K562 (cell line): ENCODE measurements at regions of chr9 and their contacts with region 1.

Region 1: DNA sequence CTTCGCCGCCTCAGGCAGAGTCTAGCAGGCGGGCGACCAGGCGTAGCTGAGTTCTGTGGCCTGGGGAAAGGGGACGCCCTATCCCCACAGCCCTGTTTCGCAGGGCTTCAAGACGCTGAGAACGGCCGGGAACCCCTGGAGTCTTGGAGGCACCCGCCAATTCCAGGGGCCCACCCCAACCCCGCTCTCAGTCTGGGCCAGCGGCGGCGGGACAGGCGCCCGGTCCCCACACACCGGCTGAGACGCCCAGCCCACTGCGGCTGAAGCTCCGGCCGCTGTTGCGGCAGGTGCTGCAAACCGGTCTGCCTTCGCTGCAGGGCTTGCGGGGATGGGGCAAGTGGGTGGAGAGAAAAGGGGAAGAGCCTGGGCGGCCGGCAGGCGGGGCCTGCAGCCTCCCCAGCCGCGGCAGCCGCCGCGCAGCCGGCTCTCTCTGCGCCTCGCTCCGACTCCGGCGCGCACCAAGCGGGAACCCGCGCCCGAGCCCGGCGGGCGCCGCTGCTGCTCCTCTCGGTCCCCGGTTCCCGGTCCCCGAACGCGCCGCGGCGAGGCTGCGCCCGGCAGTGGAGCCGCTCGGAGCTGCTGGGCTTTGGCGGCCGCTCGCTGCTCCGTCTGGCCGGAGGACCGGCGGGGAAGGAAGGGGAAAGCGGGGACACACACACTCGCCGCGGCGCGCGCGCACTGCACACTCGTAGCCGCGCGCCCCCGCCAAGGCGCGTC is at the start of gene PIP5K1B:
- DNase-seq: peak; percentile 69 to 84 (median 76)
- ATAC-seq: peak; percentile 92
- H3K4me3 ChIP-seq: peak within 1 kb of the TSS; percentile 75
- H3K27ac ChIP-seq: peak within 1 kb of the TSS; percentile 77
- H3K4me1 ChIP-seq: peaks cover 19 to 21% of the 10 kb centered on the region in 2 experiments; a peak in 4 of 5 replicates
- H3K27me3 ChIP-seq: no peaks in the 10 kb centered on the region
- CTCF ChIP-seq: peak in 1 of 3 experiments; percentile 30; a peak in 1 of 6 replicates
- EP300 ChIP-seq: no peak
- POLR2A ChIP-seq: peak; percentile 59
- RAD21 ChIP-seq: peak in 1 of 2 experiments; percentile 9; a peak in 2 of 4 replicates
- polyA plus RNA-seq, gene PIP5K1B: 3.1 to 6.3 TPM

Region 2: DNA sequence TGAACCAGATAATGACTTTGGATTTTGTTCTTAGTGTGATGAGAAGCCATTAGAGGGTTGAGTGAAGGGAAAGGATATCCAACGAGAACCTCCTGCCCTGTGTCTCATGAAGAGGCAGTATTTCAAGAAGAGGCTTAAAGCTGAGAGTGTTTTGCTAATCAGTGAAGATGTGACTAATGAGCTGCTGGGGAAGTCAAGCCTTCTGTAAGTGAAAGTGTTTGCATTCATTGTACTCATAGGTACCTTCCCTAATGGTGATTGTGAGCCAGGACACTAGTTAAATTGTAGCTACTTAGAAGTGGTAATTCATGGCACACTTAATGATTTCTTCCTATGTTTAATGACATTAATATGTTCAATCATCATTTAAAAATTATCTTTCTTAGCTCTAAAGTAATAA is 23.8 kb after region 1 on chr9:
- CTCF ChIA-PET with region 1: no interaction called
- POLR2A ChIA-PET with region 1: no interaction called
- in situ Hi-C with region 1: no loop called
- intact Hi-C with region 1: no loop called
- DNase-seq: no peak
- ATAC-seq: no peak
- H3K4me3 ChIP-seq: no peak overlapping the region
- H3K27ac ChIP-seq: no peak overlapping the region
- H3K4me1 ChIP-seq: peaks cover 0 to 13% of the 10 kb centered on the region in 2 experiments; a peak in 2 of 5 replicates
- H3K27me3 ChIP-seq: no peaks in the 10 kb centered on the region
- CTCF ChIP-seq: no peak
- EP300 ChIP-seq: no peak
- POLR2A ChIP-seq: no peak
- RAD21 ChIP-seq: no peak

Region 3: DNA sequence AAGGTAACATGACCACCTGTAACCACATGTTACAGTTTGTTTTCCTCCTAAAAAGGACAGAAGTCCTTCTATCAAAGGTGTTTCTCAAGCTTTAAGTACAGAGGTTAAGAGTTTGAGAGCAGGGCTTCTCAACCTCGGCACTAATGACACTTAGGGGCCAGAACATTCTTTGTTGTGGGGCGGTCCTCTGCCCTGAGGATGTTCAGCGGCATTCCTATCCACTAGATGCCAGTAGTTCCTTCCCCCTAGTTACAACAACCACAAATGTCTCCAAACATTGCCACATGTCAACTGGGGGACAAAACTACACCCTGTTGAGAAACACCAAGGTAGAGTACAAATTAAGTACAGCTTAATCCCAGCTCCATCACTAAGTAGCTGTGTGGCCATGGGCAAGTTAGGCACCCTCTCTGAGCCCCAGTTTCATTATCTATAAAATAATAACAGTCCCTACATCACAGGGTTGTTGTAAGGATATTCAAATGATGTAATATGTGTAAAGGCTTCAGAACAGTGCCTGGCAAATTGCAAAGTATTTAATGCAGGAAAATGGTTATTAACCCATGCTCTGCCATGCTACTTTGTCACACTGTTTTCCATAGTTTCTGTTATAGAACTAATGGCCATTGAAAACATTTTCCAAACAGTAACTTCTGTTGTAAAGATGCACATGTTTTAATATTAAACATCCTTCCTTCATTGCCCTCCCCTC is 44.8 kb after region 1 on chr9:
- CTCF ChIA-PET with region 1: no interaction called
- POLR2A ChIA-PET with region 1: interaction called, 3 read pairs
- in situ Hi-C with region 1: no loop called
- intact Hi-C with region 1: loop called (anchors 5 kb)
- DNase-seq: no peak
- ATAC-seq: no peak
- H3K4me3 ChIP-seq: no peak overlapping the region
- H3K27ac ChIP-seq: peak overlapping the region; percentile 65; the same call in 2 of the 3 replicates
- H3K4me1 ChIP-seq: peaks cover 6 to 50% of the 10 kb centered on the region in 2 experiments
- H3K27me3 ChIP-seq: no peaks in the 10 kb centered on the region
- CTCF ChIP-seq: 0 out of 6 replicates have a peak, but pooled peaks of 1 of the 3 experiments have one; percentile 6
- EP300 ChIP-seq: no peak
- POLR2A ChIP-seq: no peak
- RAD21 ChIP-seq: 0 out of 4 replicates have a peak, but pooled peaks of 1 of the 2 experiments have one; percentile 18

Region 4: DNA sequence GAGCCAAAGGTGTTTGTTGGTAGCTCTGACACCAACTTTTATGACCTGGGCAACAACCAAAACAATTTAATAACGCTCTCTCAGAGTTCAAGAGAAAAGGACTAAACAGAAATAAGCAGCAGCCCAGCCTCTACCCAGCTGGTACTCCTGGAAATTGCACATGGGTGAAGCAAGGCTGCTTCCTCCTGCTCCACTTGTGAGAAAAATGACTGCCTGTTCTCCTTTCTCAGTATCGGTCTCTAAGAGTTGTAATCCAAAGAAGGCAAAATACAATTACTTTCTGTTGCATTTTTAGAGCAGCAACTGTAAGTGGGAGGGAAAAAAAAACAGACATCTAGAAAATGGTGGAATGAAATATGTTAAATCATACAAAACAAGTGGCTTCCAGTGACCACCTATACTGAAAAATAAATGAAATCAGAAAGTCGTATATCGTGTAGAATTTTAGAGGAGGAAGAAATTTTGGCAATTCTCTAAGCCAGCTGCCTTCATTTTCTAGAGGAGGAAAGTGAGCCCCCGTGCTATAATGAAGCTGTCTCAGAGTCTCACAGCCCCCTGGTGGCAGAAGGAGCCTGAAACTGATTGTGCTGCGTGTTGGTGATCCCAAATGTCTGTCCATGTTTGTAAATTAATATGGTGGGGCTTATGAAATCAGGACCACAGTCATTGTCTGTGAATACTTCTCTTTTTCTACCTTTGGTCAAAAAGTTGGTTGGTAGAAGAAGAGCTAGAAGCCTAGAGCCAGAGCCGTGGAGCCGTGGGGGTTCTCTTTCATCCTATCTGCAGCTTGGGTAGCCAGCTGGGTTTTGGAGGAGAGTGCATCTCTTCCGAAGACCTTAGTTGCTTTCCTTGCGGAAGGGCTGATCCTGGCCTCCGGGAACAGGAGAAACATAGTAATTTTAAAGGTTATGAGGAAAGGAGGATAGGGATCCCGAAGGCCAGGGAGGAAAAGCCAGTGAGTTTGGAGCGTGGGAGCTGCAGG is 139.9 kb after region 1 on chr9:
- CTCF ChIA-PET with region 1: no interaction called
- POLR2A ChIA-PET with region 1: no interaction called
- in situ Hi-C with region 1: no loop called
- intact Hi-C with region 1: loop called (anchors 5 kb)
- DNase-seq: peak; percentile 33 to 75 (median 43)
- ATAC-seq: peak; percentile 95
- H3K4me3 ChIP-seq: no peak overlapping the region
- H3K27ac ChIP-seq: no peak overlapping the region
- H3K4me1 ChIP-seq: no peaks in the 10 kb centered on the region; a peak in 1 of 5 replicates
- H3K27me3 ChIP-seq: no peaks in the 10 kb centered on the region
- CTCF ChIP-seq: peak; percentile 68 to 75 (median 71)
- EP300 ChIP-seq: no peak
- POLR2A ChIP-seq: no peak
- RAD21 ChIP-seq: peak; percentile 63 to 83

Region 5: DNA sequence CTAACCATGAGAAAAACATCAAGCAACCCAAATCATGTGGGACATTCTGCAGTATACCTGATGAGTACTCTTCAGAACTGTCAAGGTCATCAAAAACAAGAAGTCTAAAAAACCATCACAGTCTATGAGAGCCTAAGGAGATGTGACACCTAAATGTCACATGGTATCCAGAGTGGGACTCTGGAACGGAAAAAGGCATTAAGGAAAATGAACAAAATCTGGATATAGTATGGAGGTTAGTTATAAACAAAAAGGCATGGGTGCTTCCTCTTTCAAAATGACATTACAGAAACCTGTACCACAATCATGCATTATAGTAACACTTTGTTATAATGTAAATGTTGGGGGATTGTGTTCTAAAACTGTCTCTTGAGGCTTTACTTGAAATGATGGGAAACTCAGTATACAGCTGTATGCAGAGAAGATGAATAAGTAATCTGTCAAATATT is 261.5 kb after region 1 on chr9:
- CTCF ChIA-PET with region 1: no interaction called
- POLR2A ChIA-PET with region 1: no interaction called
- in situ Hi-C with region 1: no loop called
- intact Hi-C with region 1: no loop called
- DNase-seq: no peak
- ATAC-seq: no peak
- H3K4me3 ChIP-seq: no peak overlapping the region
- H3K27ac ChIP-seq: no peak overlapping the region
- H3K4me1 ChIP-seq: peaks cover 4 to 19% of the 10 kb centered on the region in 2 experiments; a peak in 4 of 5 replicates
- H3K27me3 ChIP-seq: no peaks in the 10 kb centered on the region
- CTCF ChIP-seq: no peak
- EP300 ChIP-seq: no peak
- POLR2A ChIP-seq: no peak
- RAD21 ChIP-seq: no peak

Region 6: GRCh38 chr9:69027355-69028096 is 322.6 kb after region 1 on chr9:
- CTCF ChIA-PET with region 1: no interaction called
- POLR2A ChIA-PET with region 1: no interaction called
- in situ Hi-C with region 1: no loop called
- intact Hi-C with region 1: loop called (anchors 5 kb)
- DNase-seq: peak; percentile 44 to 78 (median 58)
- ATAC-seq: peak; percentile 92
- H3K4me3 ChIP-seq: no peak overlapping the region
- H3K27ac ChIP-seq: no peak overlapping the region; the same call in 2 of the 3 replicates
- H3K4me1 ChIP-seq: peaks cover 13 to 25% of the 10 kb centered on the region in 2 experiments; a peak in 4 of 5 replicates
- H3K27me3 ChIP-seq: no peaks in the 10 kb centered on the region
- CTCF ChIP-seq: peak; percentile 66 to 77 (median 69)
- EP300 ChIP-seq: no peak
- POLR2A ChIP-seq: no peak
- RAD21 ChIP-seq: peak; percentile 58 to 80